ENCODE measurements at regions of chr2 and their contacts with region 1.

Region 1: DNA sequence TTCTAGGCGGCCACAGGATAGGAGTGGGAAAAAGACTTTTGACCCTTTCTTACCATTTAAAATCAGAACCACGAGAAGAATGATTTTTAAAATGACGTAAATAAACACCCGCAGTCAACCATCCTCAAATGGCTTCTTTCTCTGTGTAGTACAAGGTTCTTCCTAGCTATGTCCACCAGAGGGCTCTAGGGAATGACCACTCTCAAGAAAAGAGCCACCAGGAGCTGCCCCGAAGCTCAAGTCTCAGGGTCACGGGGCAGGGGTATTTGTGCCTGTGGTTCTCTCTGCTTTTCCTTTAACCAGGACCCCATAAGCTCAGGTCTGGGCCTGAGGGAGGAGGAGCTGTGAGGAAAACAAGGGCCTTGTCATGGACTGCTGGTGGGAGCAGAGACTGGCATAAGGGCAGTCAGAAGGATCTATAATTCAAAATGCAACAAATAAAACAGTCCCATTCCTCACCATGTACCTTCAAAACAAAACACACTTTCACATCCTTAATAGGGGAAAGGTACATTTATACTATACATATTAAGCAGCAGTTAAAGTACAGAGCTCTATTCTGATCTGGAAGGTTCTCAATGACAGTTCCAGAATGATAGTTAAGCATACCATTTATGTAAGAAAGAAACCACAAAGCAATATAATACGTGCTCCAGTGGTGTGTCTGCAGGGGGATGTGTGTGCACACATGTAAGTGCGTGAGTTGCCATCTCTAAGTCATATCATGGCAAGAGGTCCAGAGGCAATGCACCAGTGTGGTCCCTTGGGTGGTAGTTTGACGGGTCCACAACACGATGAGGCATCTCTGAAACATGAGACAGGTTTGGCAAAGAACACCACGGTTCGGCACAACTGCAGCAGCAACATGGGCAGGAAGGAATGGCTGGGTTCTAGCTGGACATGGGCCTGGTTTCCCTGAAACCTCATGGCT is 18.6 kb downstream of the LYPD1 start:
- DNase-seq: peak; percentile 73
- H3K4me3 ChIP-seq: no peak overlapping the region
- H3K27ac ChIP-seq: no peak overlapping the region
- H3K4me1 ChIP-seq: peaks cover 2% of the 10 kb centered on the region
- H3K27me3 ChIP-seq: no peaks in the 10 kb centered on the region
- CTCF ChIP-seq: peak; percentile 56 to 80
- POLR2A ChIP-seq: no peak

Region 2: DNA sequence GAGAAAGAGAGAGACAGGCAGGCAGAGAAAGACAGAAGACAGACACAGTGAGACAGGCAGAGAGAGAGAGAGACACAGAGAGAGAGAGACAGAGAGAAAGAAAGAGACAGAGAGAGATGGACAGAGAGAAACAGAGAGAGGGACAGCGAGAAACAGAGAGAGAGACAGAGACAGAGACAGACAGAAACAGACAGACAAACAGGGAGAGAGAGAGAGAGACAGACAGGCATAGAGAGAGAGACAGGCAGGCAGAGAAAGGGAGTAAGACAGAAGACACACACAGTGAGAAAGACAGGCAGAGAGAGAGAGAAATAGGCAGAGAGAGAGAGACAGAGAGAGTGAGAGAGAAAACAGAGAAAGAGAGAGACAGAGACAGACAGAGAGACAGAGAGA is 384.3 kb before region 1 on chr2:
- CTCF ChIA-PET with region 1: no interaction called
- POLR2A ChIA-PET with region 1: no interaction called
- dilution Hi-C with region 1: no loop called
- intact Hi-C with region 1: loop called (anchors 10 kb)
- DNase-seq: no peak
- H3K4me3 ChIP-seq: no peak overlapping the region
- H3K27ac ChIP-seq: no peak overlapping the region
- H3K4me1 ChIP-seq: peaks cover 4% of the 10 kb centered on the region
- H3K27me3 ChIP-seq: no peaks in the 10 kb centered on the region
- CTCF ChIP-seq: no peak
- POLR2A ChIP-seq: no peak

Region 3: GRCh38 chr2:132662732-132663131 is 11.4 kb after region 1 on chr2:
- CTCF ChIA-PET with region 1: interaction called, 28 read pairs
- POLR2A ChIA-PET with region 1: no interaction called
- dilution Hi-C with region 1: no loop called
- intact Hi-C with region 1: no loop called
- DNase-seq: peak; percentile 35
- H3K4me3 ChIP-seq: no peak overlapping the region
- H3K27ac ChIP-seq: no peak overlapping the region
- H3K4me1 ChIP-seq: peaks cover 12% of the 10 kb centered on the region
- H3K27me3 ChIP-seq: no peaks in the 10 kb centered on the region
- CTCF ChIP-seq: no peak
- POLR2A ChIP-seq: no peak

Region 4: GRCh38 chr2:132670496-132671150 is 19.2 kb after region 1 on chr2:
- CTCF ChIA-PET with region 1: interaction called, 28 read pairs
- POLR2A ChIA-PET with region 1: no interaction called
- dilution Hi-C with region 1: no loop called
- intact Hi-C with region 1: loop called (anchors 1 kb)
- DNase-seq: peak; percentile 44
- H3K4me3 ChIP-seq: peak overlapping the region; percentile 55 to 76 (median 75)
- H3K27ac ChIP-seq: peak overlapping the region; percentile 69
- H3K4me1 ChIP-seq: peaks cover 30% of the 10 kb centered on the region
- H3K27me3 ChIP-seq: no peaks in the 10 kb centered on the region
- CTCF ChIP-seq: no peak
- POLR2A ChIP-seq: peak; percentile 54